Vagina (tissue), 2 donors: ENCODE measurements at regions of chr12 and their contacts with region 1.

Region 1: DNA sequence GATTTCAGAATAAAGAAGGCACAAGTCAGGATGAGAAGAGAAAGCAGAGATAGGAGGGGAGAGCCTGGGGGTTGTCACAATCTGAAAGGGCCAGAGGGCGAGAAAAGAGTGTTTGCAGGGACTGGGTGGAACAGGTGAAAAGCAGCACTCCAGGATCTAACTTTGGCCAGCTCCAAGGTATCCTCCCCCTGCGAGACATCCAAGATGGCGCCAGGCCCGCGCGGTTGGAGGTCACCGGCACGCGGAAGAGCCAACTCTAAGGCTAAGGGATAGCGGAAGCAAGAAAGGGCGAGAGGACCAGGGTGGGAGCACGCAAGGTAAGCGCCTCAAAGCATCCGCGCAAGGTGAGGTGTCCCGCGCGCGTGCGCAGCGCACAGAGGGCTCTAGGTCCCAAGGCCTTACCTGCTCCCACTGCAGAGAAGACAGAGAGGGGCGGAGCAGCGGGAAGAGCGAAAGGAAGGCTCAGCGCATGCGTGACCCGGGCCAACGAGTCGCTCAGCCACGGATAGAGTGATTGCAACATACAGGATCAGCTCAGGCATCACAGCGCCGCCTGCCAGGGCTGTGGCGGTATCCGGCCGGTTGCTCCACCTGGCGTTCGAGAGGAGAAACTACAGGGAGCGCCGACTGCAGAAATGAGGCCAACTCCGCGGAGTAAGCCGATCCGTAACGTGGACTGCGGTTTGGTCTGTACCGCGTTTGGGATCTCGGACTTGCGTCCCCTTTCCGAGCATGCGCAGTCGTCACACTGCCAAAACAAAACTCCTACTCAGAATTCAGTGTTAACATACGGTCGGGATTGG is at the start of gene ATP5MC2:
- DNase-seq: peak; percentile 99
- H3K4me3 ChIP-seq: peak within 1 kb of the TSS; percentile 69 to 85
- H3K27ac ChIP-seq: peak within 1 kb of the TSS; percentile 93
- H3K4me1 ChIP-seq: peaks cover 43% of the 10 kb centered on the region
- H3K27me3 ChIP-seq: no peaks in the 10 kb centered on the region
- CTCF ChIP-seq: peak; percentile 95 to 100 (median 99)
- POLR2A ChIP-seq: peak in 1 of 2 donors; percentile 39
- total RNA-seq, gene ATP5MC2: 311 TPM

Region 2: GRCh38 chr12:53365245-53365904 is 310.5 kb before region 1 on chr12:
- intact Hi-C with region 1: no loop called
- DNase-seq: no peak
- H3K4me3 ChIP-seq: no peak overlapping the region
- H3K27ac ChIP-seq: no peak overlapping the region
- H3K4me1 ChIP-seq: peaks cover 16% of the 10 kb centered on the region
- H3K27me3 ChIP-seq: no peaks in the 10 kb centered on the region
- CTCF ChIP-seq: no peak
- POLR2A ChIP-seq: no peak

Region 3: GRCh38 chr12:53476769-53477209 is 199.1 kb before region 1 on chr12:
- intact Hi-C with region 1: no loop called
- DNase-seq: no peak
- H3K4me3 ChIP-seq: no peak overlapping the region
- H3K27ac ChIP-seq: no peak overlapping the region
- H3K4me1 ChIP-seq: peaks cover 40% of the 10 kb centered on the region
- H3K27me3 ChIP-seq: no peaks in the 10 kb centered on the region
- CTCF ChIP-seq: no peak
- POLR2A ChIP-seq: no peak

Region 4: GRCh38 chr12:53543539-53543938 is 132.3 kb before region 1 on chr12:
- intact Hi-C with region 1: loop called (anchors 2 kb)
- DNase-seq: no peak
- H3K4me3 ChIP-seq: no peak overlapping the region
- H3K27ac ChIP-seq: peak overlapping the region; percentile 42
- H3K4me1 ChIP-seq: no peaks in the 10 kb centered on the region
- H3K27me3 ChIP-seq: no peaks in the 10 kb centered on the region
- CTCF ChIP-seq: peak; percentile 62 to 84 (median 72)
- POLR2A ChIP-seq: no peak

Region 5: GRCh38 chr12:53625946-53626701 is 49.7 kb before region 1 on chr12 and contains the start of gene ATF7:
- intact Hi-C with region 1: loop called (anchors 5 kb)
- DNase-seq: peak; percentile 98 to 99
- H3K4me3 ChIP-seq: peak within 1 kb of the TSS; percentile 74 to 78
- H3K27ac ChIP-seq: peak within 1 kb of the TSS; percentile 94
- H3K4me1 ChIP-seq: peaks cover 49% of the 10 kb centered on the region
- H3K27me3 ChIP-seq: no peaks in the 10 kb centered on the region
- CTCF ChIP-seq: no peak
- POLR2A ChIP-seq: no peak
- total RNA-seq, gene ATF7: 34.9 TPM